Naive thymus-derived CD4-positive, alpha-beta T cell (primary cell): ENCODE measurements at regions of chr10 and their contacts with region 1.

Region 1: GRCh38 chr10:88386821-88387773 is 196.0 kb downstream of the RNLS start:
- DNase-seq: peak in 7 of 9 donors; percentile 45 to 66 (median 54)
- ATAC-seq: peak; percentile 57
- H3K4me3 ChIP-seq: peak overlapping the region; percentile 45
- H3K4me3 Mint-ChIP-seq: no peak overlapping the region
- H3K27ac ChIP-seq: peak overlapping the region; percentile 82
- H3K27ac Mint-ChIP-seq: no peak overlapping the region
- H3K4me1 ChIP-seq: peaks cover 44 to 69% of the 10 kb centered on the region in 2 donors
- H3K4me1 Mint-ChIP-seq: peaks cover 6 to 41% (median 37%) of the 10 kb centered on the region in 7 donors
- H3K27me3 ChIP-seq: no peaks in the 10 kb centered on the region
- H3K27me3 Mint-ChIP-seq: no peaks in the 10 kb centered on the region

Region 2: GRCh38 chr10:87850742-87851205 is 536.3 kb before region 1 on chr10:
- CTCF ChIA-PET with region 1: interaction called, 12 read pairs
- POLR2A ChIA-PET with region 1: interaction called, 5 read pairs
- intact Hi-C with region 1: loop called in 1 of 2 experiments (anchors 1 kb)
- DNase-seq: peak in 8 of 9 donors; percentile 28 to 68 (median 54)
- ATAC-seq: peak; percentile 87
- H3K4me3 ChIP-seq: no peak overlapping the region
- H3K4me3 Mint-ChIP-seq: peak overlapping the region in 3 of 10 donors; percentile 1 to 49 (median 6)
- H3K27ac ChIP-seq: no peak overlapping the region
- H3K27ac Mint-ChIP-seq: peak overlapping the region in 1 of 9 donors; percentile 2
- H3K4me1 ChIP-seq: peaks cover 0 to 3% of the 10 kb centered on the region in 2 donors
- H3K4me1 Mint-ChIP-seq: peaks cover 6 to 23% (median 19%) of the 10 kb centered on the region in 7 donors
- H3K27me3 ChIP-seq: no peaks in the 10 kb centered on the region
- H3K27me3 Mint-ChIP-seq: peaks cover 0 to 8% (median 0%) of the 10 kb centered on the region in 5 donors

Region 3: GRCh38 chr10:88091490-88092105 is 295.5 kb before region 1 on chr10:
- CTCF ChIA-PET with region 1: interaction called, 9 read pairs
- POLR2A ChIA-PET with region 1: no interaction called
- intact Hi-C with region 1: loop called (anchors 1 kb)
- DNase-seq: peak in 8 of 9 donors; percentile 64 to 85 (median 76)
- ATAC-seq: peak; percentile 95
- H3K4me3 ChIP-seq: no peak overlapping the region
- H3K4me3 Mint-ChIP-seq: peak overlapping the region; percentile 18 to 72 (median 52)
- H3K27ac ChIP-seq: peak overlapping the region; percentile 53
- H3K27ac Mint-ChIP-seq: peak overlapping the region; percentile 76 to 94 (median 90)
- H3K4me1 ChIP-seq: peaks cover 33 to 36% of the 10 kb centered on the region in 2 donors
- H3K4me1 Mint-ChIP-seq: peaks cover 35 to 64% (median 42%) of the 10 kb centered on the region in 7 donors
- H3K27me3 ChIP-seq: no peaks in the 10 kb centered on the region
- H3K27me3 Mint-ChIP-seq: peaks cover 0 to 49% (median 0%) of the 10 kb centered on the region in 5 donors

Region 4: DNA sequence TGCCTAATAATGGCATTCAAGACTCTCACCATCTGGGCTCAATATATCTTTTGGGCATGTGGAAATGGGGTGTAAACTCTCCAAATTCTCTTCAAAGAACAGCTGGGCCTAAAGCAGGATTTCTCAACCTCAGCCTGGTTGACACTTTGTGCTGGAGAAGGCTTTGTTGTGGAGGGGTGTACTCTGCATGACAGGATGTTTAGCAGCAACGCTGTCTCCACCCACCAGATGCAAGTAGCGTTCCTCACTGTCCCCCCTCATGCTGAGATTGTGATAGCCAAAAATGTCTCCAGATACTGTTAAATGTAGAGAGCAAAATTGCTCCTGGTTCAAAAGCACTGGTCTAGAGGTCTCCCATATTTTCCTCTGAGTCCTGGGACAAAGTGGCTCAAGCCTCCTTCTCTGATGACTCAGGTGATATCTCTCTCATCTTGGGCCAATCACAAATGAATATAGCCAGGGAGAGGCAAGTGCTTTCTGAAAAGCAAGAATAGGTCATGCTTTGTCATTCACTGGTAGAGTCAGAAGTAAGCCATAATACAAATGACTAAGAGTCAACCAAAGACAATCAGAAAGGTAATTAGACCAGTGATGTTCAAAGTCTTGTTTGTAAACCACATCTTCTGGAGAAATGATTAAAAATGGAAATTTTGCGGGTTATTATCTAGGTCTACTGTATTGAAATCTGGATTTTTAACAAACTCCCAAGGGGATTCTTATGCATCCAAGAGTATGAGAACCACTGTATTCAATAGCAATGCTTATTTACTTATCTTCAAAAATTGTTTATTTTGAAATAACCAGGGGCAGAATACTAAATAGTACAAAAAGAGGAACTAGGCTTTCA is 192.8 kb before region 1 on chr10:
- CTCF ChIA-PET with region 1: interaction called, 4 read pairs
- POLR2A ChIA-PET with region 1: no interaction called
- intact Hi-C with region 1: loop called (anchors 1 to 2 kb)
- DNase-seq: peak in 8 of 9 donors; percentile 24 to 83 (median 72)
- ATAC-seq: peak; percentile 98
- H3K4me3 ChIP-seq: peak overlapping the region; percentile 9
- H3K4me3 Mint-ChIP-seq: peak overlapping the region; percentile 61 to 80 (median 72)
- H3K27ac ChIP-seq: peak overlapping the region; percentile 53
- H3K27ac Mint-ChIP-seq: peak overlapping the region; percentile 72 to 94 (median 89)
- H3K4me1 ChIP-seq: peaks cover 32% of the 10 kb centered on the region in 2 donors
- H3K4me1 Mint-ChIP-seq: peaks cover 21 to 71% (median 52%) of the 10 kb centered on the region in 7 donors
- H3K27me3 ChIP-seq: no peaks in the 10 kb centered on the region
- H3K27me3 Mint-ChIP-seq: peaks cover 0 to 2% (median 0%) of the 10 kb centered on the region in 5 donors

Region 5: DNA sequence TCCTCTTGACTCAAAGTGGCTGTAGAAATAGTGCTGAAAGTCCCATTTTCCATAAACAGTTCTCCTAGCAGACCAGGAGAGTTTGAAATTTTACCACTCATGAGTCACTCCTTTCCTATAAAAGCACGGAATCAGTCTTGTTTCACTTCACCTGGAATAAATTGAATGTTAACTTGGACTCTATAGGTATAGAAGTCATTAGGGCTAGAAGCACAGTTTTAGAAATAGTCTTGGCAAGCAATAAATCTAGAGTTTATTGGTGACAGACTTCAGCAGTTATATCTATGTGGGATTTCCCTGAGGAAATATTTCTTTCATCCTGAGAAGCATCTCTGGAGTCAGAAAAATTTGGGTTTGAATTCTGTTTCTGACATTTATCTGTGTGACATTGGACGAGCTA is 16.4 kb before region 1 on chr10:
- CTCF ChIA-PET with region 1: interaction called, 3 read pairs
- POLR2A ChIA-PET with region 1: interaction called, 5 read pairs
- intact Hi-C with region 1: loop called in 1 of 2 experiments (anchors 2 kb)
- DNase-seq: no peak
- ATAC-seq: no peak
- H3K4me3 ChIP-seq: no peak overlapping the region
- H3K4me3 Mint-ChIP-seq: no peak overlapping the region
- H3K27ac ChIP-seq: no peak overlapping the region
- H3K27ac Mint-ChIP-seq: peak overlapping the region in 1 of 9 donors; percentile 26
- H3K4me1 ChIP-seq: no peaks in the 10 kb centered on the region
- H3K4me1 Mint-ChIP-seq: peaks cover 4 to 16% (median 13%) of the 10 kb centered on the region in 7 donors
- H3K27me3 ChIP-seq: no peaks in the 10 kb centered on the region
- H3K27me3 Mint-ChIP-seq: peaks cover 0 to 8% (median 0%) of the 10 kb centered on the region in 5 donors

Region 6: DNA sequence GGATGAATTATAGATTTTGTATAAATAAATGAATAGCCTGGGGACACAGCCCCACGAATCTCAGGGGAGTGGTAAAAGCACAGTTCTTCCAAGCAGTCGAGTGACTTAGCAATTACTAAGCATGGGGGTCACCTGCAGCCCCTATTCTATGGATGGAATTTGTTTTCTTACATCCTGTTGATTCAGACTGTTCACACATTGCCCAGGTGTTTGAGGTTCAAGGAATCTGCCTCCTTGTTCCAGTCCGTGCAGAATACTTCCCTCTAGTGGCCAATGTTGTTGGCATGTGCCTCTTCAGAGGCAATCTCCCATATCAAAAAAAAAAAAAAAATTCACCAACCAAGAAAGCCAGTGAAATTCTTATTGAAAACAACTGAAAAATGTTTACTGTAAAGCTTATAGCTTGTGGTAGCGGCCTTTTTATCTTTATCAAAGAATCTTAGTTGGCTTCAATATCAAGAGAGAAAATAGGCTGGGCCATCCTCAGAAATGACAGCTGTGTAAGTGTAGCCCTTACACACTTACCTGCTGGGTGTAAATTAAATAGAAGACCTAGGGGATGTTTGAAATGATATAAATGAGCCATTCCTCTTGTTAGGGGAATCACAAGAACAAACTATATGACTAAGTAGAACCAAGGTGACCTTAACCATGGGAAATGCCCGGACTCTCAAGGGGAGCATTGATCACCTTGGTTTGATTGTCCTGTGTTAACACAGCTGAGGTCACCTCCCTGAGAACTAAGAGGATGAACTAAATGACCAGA is 423.3 kb after region 1 on chr10:
- CTCF ChIA-PET with region 1: interaction called, 3 read pairs
- POLR2A ChIA-PET with region 1: no interaction called
- intact Hi-C with region 1: loop called in 1 of 2 experiments (anchors 10 kb)
- DNase-seq: peak in 7 of 9 donors; percentile 15 to 58 (median 48)
- ATAC-seq: peak; percentile 92
- H3K4me3 ChIP-seq: no peak overlapping the region
- H3K4me3 Mint-ChIP-seq: no peak overlapping the region
- H3K27ac ChIP-seq: no peak overlapping the region
- H3K27ac Mint-ChIP-seq: peak overlapping the region in 1 of 9 donors; percentile 35
- H3K4me1 ChIP-seq: peaks cover 0 to 2% of the 10 kb centered on the region in 2 donors
- H3K4me1 Mint-ChIP-seq: peaks cover 13 to 34% (median 23%) of the 10 kb centered on the region in 7 donors
- H3K27me3 ChIP-seq: no peaks in the 10 kb centered on the region
- H3K27me3 Mint-ChIP-seq: peaks cover 0 to 29% (median 0%) of the 10 kb centered on the region in 5 donors

Region 7: DNA sequence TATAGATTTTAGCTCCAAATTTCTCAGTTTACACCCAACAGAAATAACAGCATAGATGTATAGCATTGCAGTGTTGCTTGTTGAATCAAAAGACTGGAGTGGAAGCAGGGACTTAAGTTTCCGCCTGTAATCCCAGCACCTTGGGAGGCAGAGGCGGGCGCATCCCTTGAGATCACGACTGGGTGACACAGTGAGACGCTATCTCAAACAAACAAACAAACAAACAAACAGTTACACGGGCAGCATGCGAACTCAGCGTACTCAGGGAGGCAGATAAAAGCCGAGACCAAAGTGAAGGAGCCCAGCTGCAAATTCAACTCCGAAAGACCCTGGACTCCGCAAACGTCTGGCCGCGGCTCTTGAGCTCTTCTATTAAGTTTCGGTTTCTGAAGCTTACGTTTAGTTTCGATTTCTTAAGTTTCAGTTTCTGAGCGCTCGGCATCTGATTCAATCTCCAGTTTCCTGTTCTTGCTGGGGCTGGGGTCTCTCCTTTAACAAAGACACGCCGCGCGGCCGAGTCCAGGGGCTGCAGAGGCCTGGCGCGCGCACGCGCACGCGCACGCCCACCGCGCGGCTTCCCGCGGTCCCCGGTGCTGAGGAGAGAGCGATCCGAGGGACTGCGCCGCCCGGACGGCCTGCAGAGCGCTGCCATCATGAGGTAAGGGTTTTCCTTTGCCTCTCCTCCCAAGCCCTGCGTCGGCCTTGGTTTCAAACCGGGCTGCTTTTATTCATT is 1027.2 kb after region 1 on chr10 and contains the start of gene IFIT5:
- CTCF ChIA-PET with region 1: no interaction called
- POLR2A ChIA-PET with region 1: no interaction called
- intact Hi-C with region 1: loop called in 1 of 2 experiments (anchors 10 kb)
- DNase-seq: peak; percentile 62 to 83 (median 76)
- ATAC-seq: peak; percentile 88
- H3K4me3 ChIP-seq: peak within 1 kb of the TSS; percentile 77
- H3K4me3 Mint-ChIP-seq: peak within 1 kb of the TSS; percentile 90 to 100 (median 96)
- H3K27ac ChIP-seq: peak within 1 kb of the TSS; percentile 94
- H3K27ac Mint-ChIP-seq: peak within 1 kb of the TSS; percentile 96 to 100 (median 98)
- H3K4me1 ChIP-seq: peaks cover 21% of the 10 kb centered on the region in 2 donors
- H3K4me1 Mint-ChIP-seq: peaks cover 26 to 75% (median 65%) of the 10 kb centered on the region in 7 donors
- H3K27me3 ChIP-seq: no peaks in the 10 kb centered on the region
- H3K27me3 Mint-ChIP-seq: no peaks in the 10 kb centered on the region
- total RNA-seq, gene IFIT5: 13.1 to 34.0 (median 24.8) TPM